HCT116 (cell line): ENCODE measurements at regions of chrX and their contacts with region 1.

Region 1: DNA sequence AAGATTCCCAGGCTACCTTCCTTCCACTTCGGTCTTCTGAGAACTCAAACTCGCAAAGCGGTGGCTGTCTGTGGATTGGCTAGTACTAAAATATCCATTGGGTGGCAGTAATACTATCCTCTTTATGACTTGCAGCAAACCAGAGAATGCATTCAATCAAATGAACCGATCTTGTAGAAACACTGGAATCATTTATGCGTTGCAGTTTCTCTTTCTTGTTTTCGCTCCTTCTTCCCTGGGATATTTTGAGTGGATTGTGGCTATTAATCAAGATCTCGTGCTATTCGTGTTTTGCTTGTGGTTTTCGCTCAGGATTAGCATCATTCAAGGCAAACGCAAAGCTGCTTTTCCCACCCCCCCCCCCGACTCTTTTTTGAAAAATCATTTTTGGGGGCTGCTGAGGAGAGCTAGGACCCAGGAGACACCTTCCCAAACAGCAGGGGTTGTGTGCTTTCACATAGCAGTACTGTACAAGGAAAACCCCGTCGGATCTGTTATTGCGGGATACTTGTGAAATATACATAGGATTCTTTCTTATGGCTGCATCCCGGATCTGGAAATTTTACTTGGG is at the start of gene IL1RAPL1:
- DNase-seq: no peak
- ATAC-seq: peak; percentile 68
- H3K4me3 ChIP-seq: peak within 1 kb of the TSS; percentile 56 to 70
- H3K27ac ChIP-seq: peak within 1 kb of the TSS; percentile 87
- H3K4me1 ChIP-seq: peaks cover 7 to 49% of the 10 kb centered on the region in 2 experiments
- H3K27me3 ChIP-seq: no peaks in the 10 kb centered on the region
- CTCF ChIP-seq: 0 out of 6 replicates have a peak, but pooled peaks have one; percentile 7 to 27 (median 18)
- POLR2A ChIP-seq: no peak
- RAD21 ChIP-seq: peak; percentile 56
- total RNA-seq, gene IL1RAPL1: 2.8 TPM

Region 2: GRCh38 chrX:27924261-27924660 is 662.8 kb before region 1 on chrX:
- CTCF ChIA-PET with region 1: no interaction called
- POLR2A ChIA-PET with region 1: no interaction called
- RAD21 ChIA-PET with region 1: no interaction called
- intact Hi-C with region 1: loop called (anchors 10 kb)
- DNase-seq: no peak
- ATAC-seq: no peak
- H3K4me3 ChIP-seq: no peak overlapping the region
- H3K27ac ChIP-seq: no peak overlapping the region
- H3K4me1 ChIP-seq: no peaks in the 10 kb centered on the region
- H3K27me3 ChIP-seq: no peaks in the 10 kb centered on the region
- CTCF ChIP-seq: no peak
- POLR2A ChIP-seq: no peak
- RAD21 ChIP-seq: no peak

Region 3: DNA sequence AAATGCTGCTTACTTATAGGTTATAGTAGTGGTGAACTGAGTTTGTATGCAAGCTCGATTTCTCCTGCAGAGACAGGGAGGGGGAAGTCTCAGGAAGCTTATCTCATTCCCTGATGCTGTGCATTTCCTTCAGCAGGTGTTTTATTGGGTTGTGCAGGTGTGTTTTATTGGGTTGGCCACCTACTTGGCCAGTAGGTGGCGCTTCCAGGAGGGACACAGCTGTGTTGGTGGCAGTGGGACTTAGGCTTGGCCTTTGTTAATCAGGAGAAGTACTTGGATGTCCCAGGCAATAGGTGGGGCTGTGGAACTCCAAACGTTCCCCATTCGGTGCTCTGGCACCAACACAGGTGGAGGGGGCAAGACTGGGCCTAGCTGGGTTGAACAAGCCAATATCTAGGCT is 409.9 kb before region 1 on chrX:
- CTCF ChIA-PET with region 1: no interaction called
- POLR2A ChIA-PET with region 1: no interaction called
- RAD21 ChIA-PET with region 1: no interaction called
- intact Hi-C with region 1: loop called (anchors 2 kb)
- DNase-seq: peak; percentile 38
- ATAC-seq: peak; percentile 93
- H3K4me3 ChIP-seq: no peak overlapping the region
- H3K27ac ChIP-seq: no peak overlapping the region
- H3K4me1 ChIP-seq: no peaks in the 10 kb centered on the region
- H3K27me3 ChIP-seq: no peaks in the 10 kb centered on the region
- CTCF ChIP-seq: peak; percentile 60 to 72 (median 65); a peak in 5 of 6 replicates
- POLR2A ChIP-seq: no peak
- RAD21 ChIP-seq: peak; percentile 63

Region 4: DNA sequence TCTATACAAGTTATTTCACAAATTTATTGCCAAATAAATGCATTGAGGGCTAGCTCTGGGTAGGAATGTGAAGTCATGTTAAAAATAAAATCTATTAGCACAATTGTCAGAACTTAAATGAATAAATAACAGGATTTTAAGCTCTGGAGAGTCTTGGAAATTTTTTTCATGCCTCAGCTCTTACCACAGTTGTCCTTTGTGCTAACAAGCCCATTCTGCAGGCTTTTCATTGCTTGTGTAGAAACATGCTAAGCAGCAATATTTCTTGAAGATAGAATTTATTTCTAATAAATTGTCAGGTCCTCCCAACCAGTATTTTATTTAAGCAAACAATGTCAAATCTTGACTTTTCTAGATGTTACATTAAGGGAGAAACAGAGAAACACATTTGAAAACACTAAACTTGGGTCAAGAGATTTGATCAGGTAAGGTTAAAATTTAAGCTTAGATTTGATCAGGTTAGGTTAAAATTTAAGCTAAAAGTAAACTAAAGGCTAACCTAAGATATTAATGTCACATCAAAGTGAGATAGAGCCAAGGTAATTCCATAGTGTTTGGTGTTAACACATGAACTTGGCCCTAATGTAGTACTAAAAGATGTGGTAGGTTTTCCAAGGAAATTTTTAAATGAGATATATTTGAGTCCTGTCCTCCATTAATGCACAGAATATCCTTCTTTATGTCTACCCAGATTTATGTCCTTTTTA is 178.9 kb before region 1 on chrX:
- CTCF ChIA-PET with region 1: no interaction called
- POLR2A ChIA-PET with region 1: no interaction called
- RAD21 ChIA-PET with region 1: no interaction called
- intact Hi-C with region 1: no loop called
- DNase-seq: no peak
- ATAC-seq: no peak
- H3K4me3 ChIP-seq: no peak overlapping the region
- H3K27ac ChIP-seq: no peak overlapping the region
- H3K4me1 ChIP-seq: peaks cover 0 to 7% of the 10 kb centered on the region in 2 experiments; a peak in 1 of 4 replicates
- H3K27me3 ChIP-seq: no peaks in the 10 kb centered on the region
- CTCF ChIP-seq: no peak
- POLR2A ChIP-seq: no peak
- RAD21 ChIP-seq: no peak

Region 5: GRCh38 chrX:28498658-28499057 is 88.4 kb before region 1 on chrX:
- CTCF ChIA-PET with region 1: no interaction called
- POLR2A ChIA-PET with region 1: no interaction called
- RAD21 ChIA-PET with region 1: no interaction called
- intact Hi-C with region 1: loop called (anchors 2 kb)
- DNase-seq: peak; percentile 85
- ATAC-seq: peak; percentile 77
- H3K4me3 ChIP-seq: peak overlapping the region in 1 of 2 experiments; percentile 6; a peak in 1 of 4 replicates
- H3K27ac ChIP-seq: peak overlapping the region; percentile 96
- H3K4me1 ChIP-seq: peaks cover 61 to 82% of the 10 kb centered on the region in 2 experiments
- H3K27me3 ChIP-seq: no peaks in the 10 kb centered on the region
- CTCF ChIP-seq: no peak
- POLR2A ChIP-seq: no peak
- RAD21 ChIP-seq: no peak

Region 6: DNA sequence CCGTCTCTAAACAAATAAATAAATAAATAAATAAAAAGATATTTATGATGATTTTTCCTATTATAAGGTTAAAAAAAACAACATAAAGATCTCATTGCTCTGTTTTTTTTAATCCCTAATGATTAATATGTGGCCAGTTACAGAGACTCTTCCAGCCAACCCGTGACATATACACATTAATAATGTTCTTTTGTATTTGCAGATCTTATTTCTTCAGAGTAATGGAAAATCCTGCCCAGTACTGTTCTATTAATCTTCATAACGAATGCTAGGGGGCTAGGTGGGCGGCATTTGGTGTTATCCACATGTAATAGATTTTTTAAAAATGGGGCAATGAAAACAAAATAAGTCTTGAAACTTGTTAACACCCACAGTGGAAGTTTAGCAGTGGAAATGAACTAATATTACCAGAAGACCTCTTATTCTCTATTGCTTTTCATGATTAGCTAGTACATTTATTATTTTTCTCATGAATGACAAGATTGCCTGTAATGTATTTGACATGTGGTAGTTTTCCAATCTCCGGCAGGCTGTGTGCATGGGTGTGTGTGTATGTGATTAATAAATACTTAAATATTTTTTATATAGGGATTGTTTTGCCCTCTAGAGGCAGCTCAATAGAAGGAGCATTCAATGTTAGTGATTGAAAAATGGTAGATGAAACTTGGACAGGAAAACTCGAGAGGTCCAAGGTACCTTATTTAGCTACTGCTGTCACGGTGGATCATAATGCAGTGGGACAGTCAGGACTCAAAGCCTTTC is 457.5 kb after region 1 on chrX:
- CTCF ChIA-PET with region 1: no interaction called
- POLR2A ChIA-PET with region 1: no interaction called
- RAD21 ChIA-PET with region 1: no interaction called
- intact Hi-C with region 1: loop called (anchors 5 kb)
- DNase-seq: no peak
- ATAC-seq: peak; percentile 36
- H3K4me3 ChIP-seq: no peak overlapping the region
- H3K27ac ChIP-seq: no peak overlapping the region
- H3K4me1 ChIP-seq: no peaks in the 10 kb centered on the region
- H3K27me3 ChIP-seq: no peaks in the 10 kb centered on the region
- CTCF ChIP-seq: 0 out of 6 replicates have a peak, but pooled peaks of 2 of the 3 experiments have one; percentile 7 to 20
- POLR2A ChIP-seq: no peak
- RAD21 ChIP-seq: peak; percentile 46

Region 7: GRCh38 chrX:29478336-29479069 is 891.4 kb after region 1 on chrX:
- CTCF ChIA-PET with region 1: no interaction called
- POLR2A ChIA-PET with region 1: no interaction called
- RAD21 ChIA-PET with region 1: no interaction called
- intact Hi-C with region 1: loop called (anchors 5 kb)
- DNase-seq: peak; percentile 36
- ATAC-seq: peak; percentile 100
- H3K4me3 ChIP-seq: 0 out of 4 replicates have a peak overlapping the region, but pooled peaks of 1 of the 2 experiments have one; percentile 4
- H3K27ac ChIP-seq: no peak overlapping the region
- H3K4me1 ChIP-seq: peaks cover 0 to 8% of the 10 kb centered on the region in 2 experiments; a peak in 1 of 4 replicates
- H3K27me3 ChIP-seq: no peaks in the 10 kb centered on the region
- CTCF ChIP-seq: peak; percentile 51 to 89 (median 68); a peak in 5 of 6 replicates
- POLR2A ChIP-seq: no peak
- RAD21 ChIP-seq: peak; percentile 58